Left ventricle myocardium inferior (tissue), 1 donor: ENCODE measurements at regions of chr4 and their contacts with region 1.

Region 1: DNA sequence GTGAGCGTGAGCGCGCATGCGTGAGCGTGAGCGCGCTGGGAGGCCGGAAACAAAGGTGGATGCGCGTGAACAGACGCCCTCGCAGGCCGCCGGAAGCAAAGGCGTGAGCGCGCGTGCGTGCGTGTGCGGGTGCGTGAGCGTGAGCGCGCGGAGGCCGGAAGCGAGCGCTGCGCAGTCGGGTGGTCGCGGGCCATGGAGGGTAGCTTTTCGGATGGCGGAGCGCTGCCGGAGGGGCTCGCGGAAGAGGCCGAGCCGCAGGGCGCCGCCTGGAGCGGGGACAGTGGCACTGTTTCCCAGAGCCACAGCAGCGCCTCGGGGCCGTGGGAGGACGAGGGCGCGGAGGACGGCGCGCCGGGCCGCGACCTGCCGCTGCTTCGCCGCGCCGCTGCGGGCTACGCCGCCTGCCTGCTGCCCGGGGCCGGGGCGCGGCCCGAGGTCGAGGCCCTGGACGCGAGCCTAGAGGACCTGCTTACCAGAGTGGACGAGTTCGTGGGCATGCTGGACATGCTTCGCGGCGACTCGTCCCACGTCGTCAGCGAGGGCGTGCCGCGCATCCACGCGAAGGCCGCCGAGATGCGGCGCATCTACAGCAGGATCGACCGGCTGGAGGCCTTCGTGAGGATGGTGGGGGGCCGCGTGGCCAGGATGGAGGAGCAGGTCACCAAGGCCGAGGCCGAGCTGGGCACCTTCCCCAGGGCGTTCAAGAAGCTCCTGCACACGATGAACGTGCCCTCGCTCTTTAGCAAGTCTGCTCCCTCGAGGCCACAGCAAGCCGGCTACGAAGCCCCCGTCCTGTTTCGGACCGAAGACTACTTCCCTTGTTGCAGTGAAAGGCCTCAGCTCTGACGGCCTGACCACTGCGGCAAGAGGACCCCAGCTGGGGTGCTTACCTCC is at the start of gene BLOC1S4:
- DNase-seq: peak; percentile 87
- H3K4me3 ChIP-seq: peak within 1 kb of the TSS; percentile 81
- H3K27ac ChIP-seq: peak within 1 kb of the TSS; percentile 98
- H3K4me1 ChIP-seq: peaks cover 41% of the 10 kb centered on the region
- H3K27me3 ChIP-seq: no peaks in the 10 kb centered on the region
- CTCF ChIP-seq: peak; percentile 36
- total RNA-seq, gene BLOC1S4: 7.1 TPM

Region 2: DNA sequence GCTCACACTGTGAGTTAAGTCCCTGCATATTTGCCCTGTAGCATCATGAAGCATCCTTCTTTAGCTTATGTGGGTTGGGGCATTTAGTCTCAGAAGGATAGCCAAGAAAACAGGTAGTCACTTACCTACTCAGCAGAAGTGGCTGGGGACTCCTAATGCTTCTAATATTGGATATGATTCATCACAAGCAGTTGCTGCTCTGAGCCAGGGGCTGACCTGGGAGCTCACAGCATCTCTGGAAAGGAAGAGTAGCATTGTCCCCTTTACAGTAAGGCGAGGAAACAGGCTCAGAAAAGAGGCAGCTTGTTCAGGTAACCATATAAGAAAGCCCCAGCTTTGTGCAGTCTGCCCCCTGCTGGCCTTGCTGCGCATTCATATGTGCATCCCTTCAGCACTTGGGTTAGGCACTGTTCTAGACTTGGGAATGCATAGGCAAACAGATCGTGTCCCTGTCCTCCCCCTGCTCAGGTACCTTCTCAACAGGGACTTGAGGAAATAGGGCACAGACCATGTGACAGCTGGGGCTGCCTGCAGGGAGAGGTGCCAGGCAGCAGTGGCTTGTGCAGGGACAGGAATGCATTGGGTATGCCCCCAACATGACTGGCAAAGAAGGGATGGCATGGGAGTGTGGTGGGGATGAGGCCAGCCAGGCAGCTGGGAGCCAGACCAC is 157.7 kb after region 1 on chr4:
- intact Hi-C with region 1: loop called (anchors 5 kb)
- DNase-seq: peak; percentile 70
- H3K4me3 ChIP-seq: no peak overlapping the region
- H3K27ac ChIP-seq: peak overlapping the region; percentile 18
- H3K4me1 ChIP-seq: peaks cover 71% of the 10 kb centered on the region
- H3K27me3 ChIP-seq: no peaks in the 10 kb centered on the region
- CTCF ChIP-seq: peak; percentile 88

Region 3: GRCh38 chr4:7052923-7053715 is 336.9 kb after region 1 on chr4:
- intact Hi-C with region 1: loop called (anchors 10 kb)
- DNase-seq: peak; percentile 62
- H3K4me3 ChIP-seq: no peak overlapping the region
- H3K27ac ChIP-seq: peak overlapping the region; percentile 49
- H3K4me1 ChIP-seq: peaks cover 71% of the 10 kb centered on the region
- H3K27me3 ChIP-seq: no peaks in the 10 kb centered on the region
- CTCF ChIP-seq: no peak